ENCODE measurements at regions of chr9 and their contacts with region 1.

Region 1: GRCh38 chr9:1757186-1757585 is 258.0 kb upstream of the SMARCA2 start:
- DNase-seq: no peak
- ATAC-seq: no peak
- H3K4me3 ChIP-seq: no peak overlapping the region
- H3K27ac ChIP-seq: no peak overlapping the region
- H3K4me1 ChIP-seq: no peaks in the 10 kb centered on the region
- H3K27me3 ChIP-seq: no peaks in the 10 kb centered on the region
- CTCF ChIP-seq: no peak
- POLR2A ChIP-seq: no peak
- RAD21 ChIP-seq: no peak

Region 2: GRCh38 chr9:3018076-3018475 is 1260.9 kb after region 1 on chr9:
- CTCF ChIA-PET with region 1: no interaction called
- POLR2A ChIA-PET with region 1: interaction called, 15 read pairs
- dilution Hi-C with region 1: no loop called
- in situ Hi-C with region 1: no loop called
- intact Hi-C with region 1: no loop called
- DNase-seq: no peak
- ATAC-seq: no peak
- H3K4me3 ChIP-seq: no peak overlapping the region
- H3K27ac ChIP-seq: no peak overlapping the region
- H3K4me1 ChIP-seq: no peaks in the 10 kb centered on the region
- H3K27me3 ChIP-seq: no peaks in the 10 kb centered on the region
- CTCF ChIP-seq: no peak
- POLR2A ChIP-seq: no peak
- RAD21 ChIP-seq: no peak

Measured in IMR-90 (cell line).